ENCODE measurements at regions of chr1 and their contacts with region 1.

Region 1: DNA sequence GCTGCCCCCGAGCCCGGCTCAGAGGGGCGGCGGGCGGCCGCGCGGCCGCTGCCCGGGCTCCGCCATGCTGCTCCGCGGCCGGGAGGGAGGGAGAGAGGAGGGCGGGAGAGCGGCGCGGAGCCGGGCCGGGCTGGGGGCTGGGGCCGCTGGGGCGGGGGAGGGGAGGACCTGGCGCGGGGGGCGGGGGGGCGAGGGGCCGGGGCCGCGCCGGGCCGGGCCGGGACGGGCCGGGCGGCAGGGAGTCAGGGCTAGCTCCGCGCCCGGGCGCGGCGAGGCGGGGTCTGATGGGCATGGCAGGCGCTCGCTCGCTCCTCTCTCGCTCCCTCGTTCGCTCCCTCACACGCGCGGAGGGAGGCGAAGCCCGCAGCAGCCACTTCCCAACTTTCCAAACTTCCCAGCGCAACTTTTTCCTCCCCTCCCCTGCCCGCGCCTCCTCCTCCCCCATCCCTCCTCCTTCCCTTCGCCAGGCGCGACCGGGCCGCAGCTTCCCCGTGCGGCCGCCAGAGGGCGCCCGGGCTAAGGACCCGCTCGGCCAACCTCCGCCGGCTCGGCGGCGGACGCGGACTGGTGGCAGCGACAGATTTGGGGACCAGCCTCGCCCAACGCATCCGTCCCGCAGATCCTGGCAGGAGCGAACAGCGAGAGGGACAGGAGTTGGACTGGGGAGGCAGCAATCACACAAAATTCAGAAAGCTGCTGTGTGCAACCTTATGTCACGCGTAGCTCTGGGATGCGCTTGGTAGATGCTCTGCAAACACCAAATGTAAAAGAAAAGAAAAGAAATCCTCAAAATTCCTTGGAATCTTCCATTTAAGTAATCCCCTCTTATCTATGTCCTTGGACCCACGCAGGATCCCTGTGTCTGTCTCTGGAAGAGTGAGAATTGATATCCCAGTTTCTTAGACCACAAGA is at the start of gene TRABD2B:
- DNase-seq: no peak
- H3K4me3 ChIP-seq: peak within 1 kb of the TSS; percentile 54
- H3K27ac ChIP-seq: no peak within 1 kb of the TSS
- H3K27me3 ChIP-seq: peaks cover 35% of the 10 kb centered on the region
- CTCF ChIP-seq: peak; percentile 86
- polyA plus RNA-seq, gene TRABD2B: not detected in 2 replicates

Region 2: GRCh38 chr1:47986761-47987200 is 10.8 kb before region 1 on chr1:
- CTCF ChIA-PET with region 1: interaction called, 17 read pairs
- POLR2A ChIA-PET with region 1: no interaction called
- DNase-seq: no peak
- H3K4me3 ChIP-seq: no peak overlapping the region
- H3K27ac ChIP-seq: no peak overlapping the region
- H3K27me3 ChIP-seq: peaks cover 14% of the 10 kb centered on the region
- CTCF ChIP-seq: no peak

Region 3: GRCh38 chr1:48016515-48016914 is 19.0 kb after region 1 on chr1:
- CTCF ChIA-PET with region 1: interaction called, 14 read pairs
- POLR2A ChIA-PET with region 1: no interaction called
- DNase-seq: no peak
- H3K4me3 ChIP-seq: no peak overlapping the region
- H3K27ac ChIP-seq: no peak overlapping the region
- H3K27me3 ChIP-seq: no peaks in the 10 kb centered on the region
- CTCF ChIP-seq: no peak

Region 4: DNA sequence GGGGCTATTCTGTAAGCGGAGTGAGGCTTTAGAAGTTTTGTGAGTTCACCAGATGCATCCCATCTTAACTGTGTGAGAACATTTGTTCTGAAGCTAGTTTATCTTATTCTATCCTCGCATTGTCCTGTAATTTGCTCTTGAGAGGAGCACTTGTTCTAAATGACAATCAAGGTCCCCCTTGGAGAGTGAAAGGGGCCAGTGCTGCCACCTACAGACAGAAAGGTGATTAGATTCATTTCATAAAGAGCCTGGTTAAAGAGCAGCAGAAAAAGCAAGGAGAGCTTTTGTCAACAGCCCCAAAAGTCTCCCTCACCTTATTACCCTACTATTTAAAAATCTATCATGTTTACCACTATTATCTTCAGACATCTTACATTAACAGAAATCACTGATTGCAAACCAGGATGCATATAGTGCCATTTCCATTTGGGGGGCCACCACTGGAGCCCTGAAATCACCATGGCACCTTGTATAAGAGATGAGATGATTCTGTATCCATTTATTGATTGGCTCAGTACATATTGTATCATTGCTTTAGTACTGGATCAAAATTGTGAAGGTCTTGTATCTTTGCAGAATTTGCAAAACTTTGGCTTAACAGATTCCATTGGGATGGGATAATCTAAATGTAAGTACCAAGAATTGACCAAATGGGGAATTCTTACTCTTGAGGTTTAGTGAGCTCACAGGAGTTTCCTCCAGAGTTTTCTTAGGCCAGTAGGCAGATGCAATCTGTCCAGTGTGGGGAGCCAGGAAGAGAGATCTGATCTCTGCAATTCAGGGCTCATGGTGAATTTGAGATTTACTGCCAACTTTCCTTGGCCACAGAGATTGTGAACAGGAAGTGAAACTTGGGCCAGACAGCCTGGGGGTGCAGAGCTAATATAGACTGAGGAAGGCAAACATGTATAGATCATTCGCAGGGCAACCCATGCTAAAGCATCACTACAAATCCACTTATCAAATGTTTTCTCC is 63.9 kb after region 1 on chr1:
- CTCF ChIA-PET with region 1: interaction called, 26 read pairs
- POLR2A ChIA-PET with region 1: no interaction called
- DNase-seq: no peak
- H3K4me3 ChIP-seq: no peak overlapping the region
- H3K27ac ChIP-seq: no peak overlapping the region
- H3K27me3 ChIP-seq: no peaks in the 10 kb centered on the region
- CTCF ChIP-seq: peak; percentile 61